ENCODE measurements at regions of chr2 and their contacts with region 1.

Region 1: GRCh38 chr2:213151437-213152064 is at the start of gene IKZF2:
- DNase-seq: peak; percentile 80
- CTCF ChIP-seq: no peak

Region 2: GRCh38 chr2:212730994-212731393 is 420.6 kb before region 1 on chr2:
- in situ Hi-C with region 1: loop called (anchors 25 kb)
- DNase-seq: peak; percentile 58
- CTCF ChIP-seq: no peak

Region 3: DNA sequence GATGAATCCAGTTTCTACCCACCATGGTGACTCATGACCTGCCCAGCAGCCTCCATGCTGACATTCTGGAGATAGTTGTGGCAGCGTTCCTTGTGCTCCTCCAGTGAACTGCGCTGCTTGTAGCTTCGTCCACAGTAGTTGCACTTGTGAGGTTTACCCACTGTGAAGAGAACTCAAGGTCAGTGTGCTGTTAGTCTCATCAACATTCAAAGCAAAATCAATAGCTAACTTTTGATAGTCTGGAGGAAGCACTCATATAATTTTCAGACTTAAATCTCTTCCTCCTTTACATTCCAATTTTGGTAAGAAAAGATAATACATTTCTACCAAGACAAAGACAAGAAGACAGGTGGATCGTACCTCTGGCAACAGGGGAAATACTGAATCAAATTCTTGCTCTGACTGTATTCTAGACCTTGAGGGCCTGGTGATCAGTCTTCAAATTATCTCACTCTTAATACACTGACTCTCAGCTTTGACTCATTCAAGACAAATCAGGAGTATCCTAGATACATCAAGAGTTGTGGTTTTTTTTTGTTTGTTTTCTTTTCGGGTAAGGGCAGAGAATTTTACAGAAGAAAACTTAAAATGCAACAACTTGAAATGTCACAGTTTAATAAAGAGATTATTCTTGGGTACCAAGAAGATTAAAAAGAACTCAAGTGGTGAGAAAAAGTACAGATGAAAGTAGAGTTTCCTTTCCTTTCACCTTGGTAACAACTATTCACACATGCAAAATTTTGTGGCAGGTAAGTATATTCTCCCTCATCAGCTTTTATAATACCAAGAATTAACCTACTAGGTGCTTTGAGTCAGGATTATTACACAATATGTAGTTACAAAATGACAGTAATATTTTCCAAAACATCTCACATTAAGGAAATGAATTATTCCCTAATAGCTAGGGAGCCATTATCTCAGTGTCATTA is 129.3 kb before region 1 on chr2:
- in situ Hi-C with region 1: loop called (anchors 5 kb)
- DNase-seq: peak; percentile 28
- CTCF ChIP-seq: no peak

Region 4: GRCh38 chr2:213079756-213080155 is 71.8 kb before region 1 on chr2:
- in situ Hi-C with region 1: no loop called
- DNase-seq: no peak
- CTCF ChIP-seq: no peak

Region 5: DNA sequence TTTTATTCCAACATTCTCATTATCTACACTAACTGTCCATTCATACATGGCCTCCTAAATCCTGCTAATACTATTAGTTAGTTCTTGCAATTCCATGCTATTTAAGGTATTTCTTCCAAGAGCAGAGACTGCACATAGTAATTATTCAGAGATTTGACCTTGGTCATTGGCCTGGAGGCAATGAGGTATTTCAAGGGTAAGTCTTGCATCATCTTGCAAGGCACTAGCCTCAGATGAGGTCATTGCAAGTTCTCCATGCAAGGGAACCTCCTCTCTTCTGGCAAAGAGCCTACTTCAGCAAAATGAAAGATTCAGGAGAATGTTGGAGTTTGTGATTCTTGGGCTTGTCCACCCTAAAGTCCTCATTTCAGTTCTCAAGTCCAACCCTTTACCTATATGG is 48.3 kb after region 1 on chr2:
- in situ Hi-C with region 1: no loop called
- DNase-seq: no peak
- CTCF ChIP-seq: no peak

Region 6: DNA sequence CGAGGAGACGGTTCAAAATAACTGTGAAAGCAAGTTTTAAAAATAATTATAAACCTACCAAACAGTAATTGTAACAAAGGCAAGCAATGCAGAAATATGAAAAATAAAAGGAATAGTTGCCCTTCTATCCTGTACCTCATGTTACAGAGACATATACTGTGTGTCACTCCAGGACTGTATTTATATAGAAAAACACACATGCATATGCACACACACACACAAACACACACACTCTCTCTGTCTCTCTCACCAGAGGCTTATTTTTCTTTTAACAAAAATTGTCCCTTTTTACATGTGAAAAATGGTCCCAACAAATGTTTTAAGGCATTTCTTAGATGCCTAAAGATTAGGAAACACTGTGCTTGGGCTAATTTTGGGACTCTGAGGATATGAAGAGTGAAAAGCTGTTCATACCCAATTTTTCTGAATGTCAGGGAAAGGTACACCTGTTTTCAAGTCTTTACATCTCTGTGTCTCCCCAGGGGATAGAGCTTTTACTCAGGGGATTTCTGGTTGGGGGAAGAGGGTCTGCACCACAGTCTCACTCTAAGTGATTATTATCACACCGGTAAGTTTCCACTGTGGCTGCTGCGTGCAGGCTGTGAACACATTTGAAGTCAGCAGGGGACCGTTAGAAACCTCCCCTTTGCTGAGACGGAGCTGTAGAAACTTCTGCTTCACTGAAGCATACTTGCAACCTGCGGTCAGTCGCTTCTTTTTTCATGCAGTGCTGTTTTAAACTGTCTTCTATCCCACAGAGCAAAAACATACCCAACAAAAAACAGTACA is 81.3 kb after region 1 on chr2:
- in situ Hi-C with region 1: loop called (anchors 5 kb)
- DNase-seq: peak; percentile 16
- CTCF ChIP-seq: no peak

Measured in GM13976 (cell line).